Activated naive CD4-positive, alpha-beta T cell treated with anti-CD3 and anti-CD28 coated beads for 36 hours (primary cell): ENCODE measurements at regions of chr12 and their contacts with region 1.

Region 1: GRCh38 chr12:666766-667308 is 3.6 kb upstream of the NINJ2 start:
- DNase-seq: peak; percentile 47
- H3K4me3 Mint-ChIP-seq: peak overlapping the region; percentile 36
- H3K27ac Mint-ChIP-seq: peak overlapping the region; percentile 78
- H3K4me1 Mint-ChIP-seq: peaks cover 75% of the 10 kb centered on the region
- H3K27me3 Mint-ChIP-seq: no peaks in the 10 kb centered on the region

Region 2: GRCh38 chr12:614411-614970 is 52.3 kb before region 1 on chr12:
- CTCF ChIA-PET with region 1: interaction called, 3 read pairs
- intact Hi-C with region 1: loop called (anchors 2 kb)
- DNase-seq: peak; percentile 72
- H3K4me3 Mint-ChIP-seq: no peak overlapping the region
- H3K27ac Mint-ChIP-seq: no peak overlapping the region
- H3K4me1 Mint-ChIP-seq: peaks cover 30% of the 10 kb centered on the region
- H3K27me3 Mint-ChIP-seq: no peaks in the 10 kb centered on the region

Region 3: DNA sequence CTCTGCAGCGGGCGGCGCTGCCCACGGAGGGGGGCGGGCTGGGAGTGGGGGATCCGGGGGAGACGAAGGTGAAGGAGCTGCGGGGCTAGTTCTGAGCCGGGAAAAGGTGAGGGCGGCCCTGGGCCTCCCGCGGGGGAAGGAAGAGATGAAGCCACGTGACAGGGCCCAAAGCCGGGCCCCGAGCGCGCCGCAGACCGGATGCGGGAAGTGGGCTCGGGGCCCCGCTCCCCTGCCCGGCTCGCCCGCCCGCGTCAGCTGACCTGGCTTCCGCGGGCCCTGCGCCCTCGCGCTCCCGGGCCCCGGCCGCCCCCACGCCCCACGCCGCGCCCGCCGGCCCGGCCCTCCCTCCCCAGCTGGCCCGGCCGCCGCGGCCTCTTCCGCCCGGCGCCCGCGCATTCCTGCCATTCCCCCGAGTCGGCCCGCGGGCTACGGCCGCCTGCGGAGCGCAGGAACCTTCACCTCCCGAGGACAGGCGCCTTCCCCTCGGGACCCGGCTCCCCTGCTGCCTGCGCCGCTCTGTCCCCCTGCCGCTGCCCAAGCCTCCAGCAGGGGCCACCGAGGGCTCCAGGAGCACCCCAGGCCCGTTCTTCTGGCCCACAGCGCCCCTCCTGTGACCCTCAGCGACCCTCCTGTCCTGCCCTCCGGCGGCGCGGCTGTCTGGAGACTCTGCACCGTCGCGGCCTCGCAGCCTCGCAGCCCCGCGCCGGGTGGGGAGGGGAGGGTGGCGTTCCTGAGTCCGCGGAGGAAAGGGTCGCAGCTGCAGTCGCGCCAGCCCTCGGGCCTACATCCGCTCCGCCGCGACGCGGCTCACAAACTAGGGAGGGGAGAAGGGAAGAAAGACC is 24.0 kb before region 1 on chr12:
- CTCF ChIA-PET with region 1: no interaction called
- intact Hi-C with region 1: loop called (anchors 1 kb)
- DNase-seq: peak; percentile 81
- H3K4me3 Mint-ChIP-seq: peak overlapping the region; percentile 74
- H3K27ac Mint-ChIP-seq: peak overlapping the region; percentile 81
- H3K4me1 Mint-ChIP-seq: peaks cover 58% of the 10 kb centered on the region
- H3K27me3 Mint-ChIP-seq: no peaks in the 10 kb centered on the region

Region 4: DNA sequence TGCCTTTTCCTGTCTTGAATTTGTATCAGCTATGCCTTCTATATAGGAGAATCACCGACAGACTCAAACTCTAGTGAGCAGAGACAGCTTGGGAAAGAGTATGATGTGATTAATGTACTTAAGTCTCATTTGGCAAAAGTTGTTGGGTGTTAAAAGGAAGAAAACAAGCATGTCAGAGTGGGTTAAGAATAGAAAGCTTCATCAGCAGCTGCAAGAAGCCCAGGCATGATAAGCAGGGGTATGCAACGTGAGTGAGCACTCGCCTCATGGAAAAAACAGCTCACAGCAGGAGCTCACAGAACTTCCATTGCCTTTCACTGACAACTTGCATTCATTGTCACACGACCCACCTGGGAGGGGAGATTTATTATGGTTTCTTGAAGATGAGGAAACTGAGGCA is 49.7 kb after region 1 on chr12:
- CTCF ChIA-PET with region 1: interaction called, 9 read pairs
- intact Hi-C with region 1: loop called (anchors 1 kb)
- DNase-seq: peak; percentile 80
- H3K4me3 Mint-ChIP-seq: peak overlapping the region; percentile 0
- H3K27ac Mint-ChIP-seq: peak overlapping the region; percentile 75
- H3K4me1 Mint-ChIP-seq: peaks cover 65% of the 10 kb centered on the region
- H3K27me3 Mint-ChIP-seq: no peaks in the 10 kb centered on the region

Region 5: GRCh38 chr12:810671-811415 is 144.0 kb after region 1 on chr12:
- CTCF ChIA-PET with region 1: interaction called, 8 read pairs
- intact Hi-C with region 1: loop called (anchors 2 kb)
- DNase-seq: peak; percentile 77
- H3K4me3 Mint-ChIP-seq: no peak overlapping the region
- H3K27ac Mint-ChIP-seq: peak overlapping the region; percentile 54
- H3K4me1 Mint-ChIP-seq: peaks cover 64% of the 10 kb centered on the region
- H3K27me3 Mint-ChIP-seq: no peaks in the 10 kb centered on the region

Region 6: GRCh38 chr12:905261-906031 is 238.6 kb after region 1 on chr12:
- CTCF ChIA-PET with region 1: no interaction called
- intact Hi-C with region 1: no loop called
- DNase-seq: peak; percentile 21
- H3K4me3 Mint-ChIP-seq: no peak overlapping the region
- H3K27ac Mint-ChIP-seq: peak overlapping the region; percentile 52
- H3K4me1 Mint-ChIP-seq: peaks cover 32% of the 10 kb centered on the region
- H3K27me3 Mint-ChIP-seq: no peaks in the 10 kb centered on the region